CD4-positive, alpha-beta T cell (primary cell): ENCODE measurements at regions of chr5 and their contacts with region 1.

Region 1: GRCh38 chr5:179559284-179560252 is 9.2 kb downstream of the RUFY1 start:
- DNase-seq: peak; percentile 65 to 95 (median 84)
- ATAC-seq: peak; percentile 99
- H3K4me3 ChIP-seq: peak overlapping the region; percentile 60
- H3K4me3 Mint-ChIP-seq: peak overlapping the region; percentile 90
- H3K27ac ChIP-seq: peak overlapping the region; percentile 4 to 16
- H3K27ac Mint-ChIP-seq: peak overlapping the region; percentile 89
- H3K4me1 ChIP-seq: peaks cover 10% of the 10 kb centered on the region
- H3K4me1 Mint-ChIP-seq: peaks cover 28% of the 10 kb centered on the region
- H3K27me3 ChIP-seq: no peaks in the 10 kb centered on the region
- H3K27me3 Mint-ChIP-seq: no peaks in the 10 kb centered on the region
- CTCF ChIP-seq: no peak

Region 2: DNA sequence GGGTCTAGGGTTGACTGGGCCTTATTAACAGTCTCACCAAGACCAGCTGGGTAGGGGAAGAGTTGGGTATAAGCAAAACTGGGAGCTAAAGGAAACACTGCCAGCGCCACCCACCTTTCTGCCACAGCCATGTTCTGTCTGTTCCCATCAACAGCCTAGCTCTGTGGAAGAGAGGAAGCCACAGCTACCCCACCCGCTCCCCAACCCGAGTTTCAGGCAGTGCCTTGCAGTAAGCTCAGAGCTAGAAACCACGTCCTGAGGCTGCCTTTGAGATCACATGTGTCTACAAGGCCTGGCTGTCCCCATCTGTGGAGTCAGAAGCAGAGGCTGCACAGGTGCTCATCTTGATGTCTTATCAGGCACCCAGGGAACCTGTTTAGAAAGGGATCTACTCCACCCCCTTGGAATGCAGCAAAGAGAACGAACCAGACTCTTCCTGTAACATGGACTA is 48.6 kb after region 1 on chr5:
- CTCF ChIA-PET with region 1: no interaction called
- POLR2A ChIA-PET with region 1: interaction called, 11 read pairs
- intact Hi-C with region 1: no loop called
- DNase-seq: peak; percentile 31 to 77 (median 42)
- ATAC-seq: peak; percentile 89
- H3K4me3 ChIP-seq: no peak overlapping the region
- H3K4me3 Mint-ChIP-seq: peak overlapping the region; percentile 45
- H3K27ac ChIP-seq: peak overlapping the region in 1 of 2 donors; percentile 30
- H3K27ac Mint-ChIP-seq: peak overlapping the region; percentile 78
- H3K4me1 ChIP-seq: peaks cover 41% of the 10 kb centered on the region
- H3K4me1 Mint-ChIP-seq: peaks cover 49% of the 10 kb centered on the region
- H3K27me3 ChIP-seq: no peaks in the 10 kb centered on the region
- H3K27me3 Mint-ChIP-seq: no peaks in the 10 kb centered on the region
- CTCF ChIP-seq: no peak

Region 3: GRCh38 chr5:179697993-179698934 is 138.7 kb after region 1 on chr5:
- CTCF ChIA-PET with region 1: no interaction called
- POLR2A ChIA-PET with region 1: interaction called, 6 read pairs
- intact Hi-C with region 1: loop called in 1 of 2 experiments (anchors 2 kb)
- DNase-seq: peak; percentile 97 to 100 (median 98)
- ATAC-seq: peak; percentile 86
- H3K4me3 ChIP-seq: peak overlapping the region; percentile 93
- H3K4me3 Mint-ChIP-seq: peak overlapping the region; percentile 95
- H3K27ac ChIP-seq: peak overlapping the region; percentile 83 to 94
- H3K27ac Mint-ChIP-seq: peak overlapping the region; percentile 98
- H3K4me1 ChIP-seq: peaks cover 49% of the 10 kb centered on the region
- H3K4me1 Mint-ChIP-seq: peaks cover 47% of the 10 kb centered on the region
- H3K27me3 ChIP-seq: no peaks in the 10 kb centered on the region
- H3K27me3 Mint-ChIP-seq: no peaks in the 10 kb centered on the region
- CTCF ChIP-seq: no peak

Region 4: DNA sequence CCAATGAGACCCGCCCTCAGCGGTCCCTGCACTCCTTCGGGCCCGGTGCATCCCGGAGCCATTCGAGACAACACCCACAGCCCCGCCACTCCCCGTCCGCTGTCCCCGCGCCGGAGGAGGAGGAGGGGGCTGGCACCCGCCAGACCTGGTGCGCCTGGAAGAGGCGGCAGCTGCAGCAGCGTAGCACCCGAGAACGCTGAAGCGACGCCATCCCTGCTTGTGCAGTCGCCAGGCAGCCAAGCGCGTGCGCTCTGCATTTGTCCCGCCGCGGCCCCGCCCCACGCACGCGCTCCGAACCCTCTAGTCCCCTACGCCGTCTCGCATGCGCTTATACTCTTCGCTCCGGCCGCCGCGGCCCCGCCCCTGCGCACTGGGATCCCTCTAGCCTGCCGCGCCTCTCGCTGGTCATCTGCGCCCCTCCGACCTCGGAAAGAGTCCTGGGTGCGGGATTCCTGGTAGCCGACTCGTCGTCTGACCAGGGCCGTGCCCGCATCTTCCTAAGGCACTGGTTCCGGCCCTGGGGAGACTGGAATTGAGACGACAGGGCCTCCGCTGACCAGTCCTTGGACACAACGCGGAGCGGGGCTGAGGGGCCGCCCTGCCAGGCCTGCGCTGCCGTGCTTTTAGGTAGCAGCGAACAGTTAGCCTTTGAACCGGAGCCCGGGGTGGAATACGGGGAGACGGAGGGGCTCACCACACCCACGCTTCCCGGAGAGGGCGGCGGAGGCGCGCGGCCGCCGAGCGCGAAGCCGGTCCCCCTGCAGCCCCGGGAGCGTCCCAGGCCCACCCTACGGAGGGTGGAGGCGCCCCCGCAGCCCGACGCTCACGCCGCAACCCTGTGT is 299.2 kb after region 1 on chr5 and contains the start of gene MRNIP:
- CTCF ChIA-PET with region 1: no interaction called
- POLR2A ChIA-PET with region 1: no interaction called
- intact Hi-C with region 1: loop called in 1 of 2 experiments (anchors 10 kb)
- DNase-seq: peak; percentile 80 to 94 (median 88)
- ATAC-seq: peak; percentile 96
- H3K4me3 ChIP-seq: peak within 1 kb of the TSS; percentile 74
- H3K4me3 Mint-ChIP-seq: peak within 1 kb of the TSS; percentile 96
- H3K27ac ChIP-seq: peak within 1 kb of the TSS; percentile 34 to 61
- H3K27ac Mint-ChIP-seq: peak within 1 kb of the TSS; percentile 94
- H3K4me1 ChIP-seq: peaks cover 22% of the 10 kb centered on the region
- H3K4me1 Mint-ChIP-seq: peaks cover 17% of the 10 kb centered on the region
- H3K27me3 ChIP-seq: no peaks in the 10 kb centered on the region
- H3K27me3 Mint-ChIP-seq: no peaks in the 10 kb centered on the region
- CTCF ChIP-seq: no peak
- total RNA-seq, gene MRNIP: 31.8 to 32.8 TPM